ENCODE measurements at regions of chr19 and their contacts with region 1.

Region 1: DNA sequence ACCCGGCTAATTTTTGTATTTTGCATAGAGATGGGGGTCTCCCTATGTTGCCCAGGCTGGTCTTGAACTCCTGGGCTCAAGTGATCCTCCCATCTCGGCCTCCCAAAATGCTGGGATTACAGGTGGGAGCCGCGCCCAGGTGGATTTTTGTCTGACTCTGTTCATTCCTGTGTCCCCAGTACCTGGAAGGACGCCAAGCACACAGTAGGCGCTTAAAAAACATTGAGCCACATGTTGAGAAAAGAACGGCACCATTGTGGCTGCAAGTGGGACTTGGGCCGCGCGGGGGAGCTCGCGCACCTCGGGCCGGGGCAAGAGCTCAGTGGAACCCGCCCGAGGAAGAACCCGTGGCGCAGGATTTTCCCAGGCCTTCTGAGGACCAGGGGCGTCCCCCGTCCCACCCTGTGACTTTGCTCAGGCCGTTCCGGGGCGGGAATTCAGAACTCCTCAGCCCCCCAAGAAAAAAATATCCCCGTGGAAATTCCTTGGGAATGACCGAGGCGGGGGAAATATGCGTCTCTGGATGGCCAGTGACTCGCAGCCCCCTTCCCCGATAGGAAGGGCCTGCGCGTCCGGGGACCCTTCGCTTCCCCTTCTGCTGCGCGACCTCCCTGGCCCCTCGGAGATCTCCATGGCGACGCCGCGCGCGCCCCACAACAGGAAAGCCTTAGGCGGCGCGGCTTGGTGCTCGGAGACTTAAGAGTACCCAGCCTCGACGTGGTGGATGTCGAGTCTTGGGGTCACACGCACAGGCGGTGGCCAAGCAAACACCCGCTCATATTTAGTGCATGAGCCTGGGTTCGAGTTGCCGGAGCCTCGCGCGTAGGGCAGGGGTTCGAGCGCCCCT is 1.4 kb upstream of the ICAM1 start:
- DNase-seq: peak; percentile 69 to 97 (median 90)
- ATAC-seq: peak; percentile 79
- H3K4me3 ChIP-seq: peak overlapping the region; percentile 51 to 65
- H3K27ac ChIP-seq: peak overlapping the region; percentile 96 to 99
- H3K4me1 ChIP-seq: peaks cover 3 to 62% of the 10 kb centered on the region in 2 donors
- H3K27me3 ChIP-seq: no peaks in the 10 kb centered on the region
- CTCF ChIP-seq: peak; percentile 88 to 92

Region 2: GRCh38 chr19:10315335-10316214 is 46.0 kb after region 1 on chr19 and contains the start of gene FDX2:
- intact Hi-C with region 1: no loop called
- DNase-seq: peak; percentile 79 to 97 (median 88)
- ATAC-seq: peak; percentile 92
- H3K4me3 ChIP-seq: peak within 1 kb of the TSS; percentile 92 to 94
- H3K27ac ChIP-seq: peak within 1 kb of the TSS; percentile 13 to 63
- H3K4me1 ChIP-seq: peaks cover 4 to 19% of the 10 kb centered on the region in 2 donors
- H3K27me3 ChIP-seq: no peaks in the 10 kb centered on the region
- CTCF ChIP-seq: no peak
- polyA plus RNA-seq, gene FDX2: 16.0 to 20.8 (median 19.3) TPM

Region 3: DNA sequence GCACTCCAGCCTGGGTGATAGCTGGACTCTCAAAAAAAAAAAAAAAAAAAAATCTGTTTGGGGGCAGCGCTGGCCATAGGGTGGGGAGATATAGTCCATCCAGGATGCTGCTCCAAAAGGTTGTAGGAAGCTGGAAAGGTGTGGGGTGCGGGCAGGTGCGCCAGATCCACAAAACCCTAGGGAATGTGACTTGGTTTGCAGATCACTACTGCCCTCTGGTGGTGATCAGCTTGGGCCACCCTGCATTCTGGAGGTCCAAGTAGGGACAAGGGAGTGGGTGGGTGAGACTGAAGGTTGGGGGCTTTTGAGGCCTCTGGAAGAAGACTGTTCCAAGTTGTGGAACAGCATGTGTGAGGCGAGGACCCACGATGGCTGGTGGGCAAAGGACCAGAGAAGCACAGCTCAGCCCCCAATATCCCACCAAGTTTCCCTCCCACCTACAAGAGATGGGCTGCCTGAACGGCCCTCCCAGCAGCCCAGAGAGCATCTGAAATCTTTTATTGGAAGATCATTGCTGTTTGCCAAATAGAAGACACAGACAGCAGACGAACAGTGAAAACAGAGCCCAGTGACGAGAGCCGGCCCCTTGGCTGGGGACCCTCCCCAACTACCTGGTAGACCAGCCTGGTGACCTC is 121.2 kb after region 1 on chr19:
- intact Hi-C with region 1: loop called in 1 of 2 experiments (anchors 5 kb)
- DNase-seq: peak in 3 of 4 donors; percentile 65 to 82 (median 76)
- ATAC-seq: peak; percentile 86
- H3K4me3 ChIP-seq: no peak overlapping the region
- H3K27ac ChIP-seq: no peak overlapping the region
- H3K4me1 ChIP-seq: peaks cover 5 to 21% of the 10 kb centered on the region in 2 donors
- H3K27me3 ChIP-seq: no peaks in the 10 kb centered on the region
- CTCF ChIP-seq: peak; percentile 84 to 89